Breast epithelium (tissue), 4 donors: ENCODE measurements at regions of chr22 and their contacts with region 1.

Region 1: GRCh38 chr22:44460691-44461375 is 37.2 kb downstream of the RTL6 start:
- DNase-seq: no peak
- H3K4me3 ChIP-seq: no peak overlapping the region
- H3K27ac ChIP-seq: no peak overlapping the region
- H3K4me1 ChIP-seq: no peaks in the 10 kb centered on the region
- H3K27me3 ChIP-seq: no peaks in the 10 kb centered on the region
- CTCF ChIP-seq: no peak
- POLR2A ChIP-seq: no peak

Region 2: GRCh38 chr22:44337678-44338004 is 123.2 kb before region 1 on chr22:
- intact Hi-C with region 1: no loop called
- DNase-seq: no peak
- H3K4me3 ChIP-seq: no peak overlapping the region
- H3K27ac ChIP-seq: no peak overlapping the region
- H3K4me1 ChIP-seq: no peaks in the 10 kb centered on the region
- H3K27me3 ChIP-seq: peaks cover 0 to 22% of the 10 kb centered on the region in 2 donors
- CTCF ChIP-seq: no peak
- POLR2A ChIP-seq: no peak

Region 3: GRCh38 chr22:45019861-45020655 is 559.2 kb after region 1 on chr22:
- intact Hi-C with region 1: loop called (anchors 5 kb)
- DNase-seq: no peak
- H3K4me3 ChIP-seq: no peak overlapping the region
- H3K27ac ChIP-seq: no peak overlapping the region
- H3K4me1 ChIP-seq: no peaks in the 10 kb centered on the region
- H3K27me3 ChIP-seq: peaks cover 0 to 25% of the 10 kb centered on the region in 2 donors
- CTCF ChIP-seq: no peak
- POLR2A ChIP-seq: no peak

Region 4: GRCh38 chr22:45344334-45344733 is 883.5 kb after region 1 on chr22:
- intact Hi-C with region 1: no loop called
- DNase-seq: no peak
- H3K4me3 ChIP-seq: no peak overlapping the region
- H3K27ac ChIP-seq: no peak overlapping the region
- H3K4me1 ChIP-seq: no peaks in the 10 kb centered on the region
- H3K27me3 ChIP-seq: no peaks in the 10 kb centered on the region
- CTCF ChIP-seq: no peak
- POLR2A ChIP-seq: no peak